Motor neuron (in vitro differentiated cells): ENCODE measurements at regions of chr6 and their contacts with region 1.

Region 1: DNA sequence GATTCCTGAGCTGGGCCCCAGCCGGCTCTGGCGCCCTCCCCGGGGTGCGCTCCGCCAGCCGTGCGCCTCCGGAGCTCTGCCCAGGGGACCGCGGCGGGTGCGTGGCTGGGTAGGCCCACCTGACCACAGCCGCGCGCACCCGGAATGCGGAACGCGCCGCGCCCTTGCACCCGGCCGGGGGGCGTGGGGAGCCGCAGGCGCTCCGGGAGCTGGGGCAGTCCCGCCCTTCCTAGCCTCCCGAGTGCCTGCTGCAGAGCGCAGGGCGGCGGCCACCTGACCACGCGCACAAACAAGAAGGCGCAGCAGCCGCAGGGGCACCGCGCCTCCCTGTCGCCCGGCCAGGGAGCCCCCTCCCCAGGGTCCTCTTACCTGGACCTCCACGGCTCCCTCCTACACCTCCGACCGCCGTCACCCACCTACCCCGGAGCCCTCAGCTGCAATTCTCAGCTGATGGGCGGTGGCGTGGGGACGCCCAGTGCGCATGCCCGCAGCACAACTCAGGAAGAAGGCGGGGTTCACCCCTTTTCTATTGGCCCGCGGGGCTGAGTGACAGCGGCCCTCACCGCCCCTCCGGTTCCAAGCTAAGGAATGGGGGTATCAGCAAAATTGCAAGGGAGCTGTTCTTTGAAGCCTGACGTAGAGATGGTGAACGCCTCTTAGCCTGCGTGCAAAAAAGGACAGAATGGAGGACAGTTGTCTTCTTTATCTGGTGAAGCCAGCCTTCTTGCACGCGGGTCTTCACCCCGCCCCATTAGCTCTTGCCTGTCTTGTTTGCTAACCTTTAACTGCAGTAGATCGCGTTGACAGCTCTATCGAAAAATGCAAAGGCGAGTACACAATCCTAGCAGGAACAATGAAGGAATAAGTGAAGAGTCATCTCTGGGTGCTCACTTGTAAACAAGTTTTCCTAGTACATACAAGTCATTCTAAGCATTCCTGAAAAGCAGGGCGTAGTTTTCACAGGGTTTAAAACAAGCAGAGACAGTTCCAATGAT is at the start of gene STX7:
- ATAC-seq: peak; percentile 87 to 97 (median 96)
- H3K4me3 ChIP-seq: peak within 1 kb of the TSS; percentile 64 to 97 (median 89)
- H3K27ac ChIP-seq: peak within 1 kb of the TSS; percentile 59 to 63
- H3K4me1 ChIP-seq: peaks cover 5 to 11% of the 10 kb centered on the region in 2 donors
- total RNA-seq, gene STX7: 12.7 to 56.3 (median 35.5) TPM

Region 2: GRCh38 chr6:132247381-132248159 is 265.4 kb before region 1 on chr6:
- in situ Hi-C with region 1: no loop called
- ATAC-seq: no peak
- H3K4me3 ChIP-seq: no peak overlapping the region
- H3K27ac ChIP-seq: no peak overlapping the region
- H3K4me1 ChIP-seq: no peaks in the 10 kb centered on the region

Region 3: GRCh38 chr6:132648356-132649227 is 135.7 kb after region 1 on chr6:
- in situ Hi-C with region 1: no loop called
- ATAC-seq: peak in 3 of 8 experiments; percentile 48 to 57 (median 53)
- H3K4me3 ChIP-seq: no peak overlapping the region
- H3K27ac ChIP-seq: no peak overlapping the region
- H3K4me1 ChIP-seq: no peaks in the 10 kb centered on the region

Region 4: DNA sequence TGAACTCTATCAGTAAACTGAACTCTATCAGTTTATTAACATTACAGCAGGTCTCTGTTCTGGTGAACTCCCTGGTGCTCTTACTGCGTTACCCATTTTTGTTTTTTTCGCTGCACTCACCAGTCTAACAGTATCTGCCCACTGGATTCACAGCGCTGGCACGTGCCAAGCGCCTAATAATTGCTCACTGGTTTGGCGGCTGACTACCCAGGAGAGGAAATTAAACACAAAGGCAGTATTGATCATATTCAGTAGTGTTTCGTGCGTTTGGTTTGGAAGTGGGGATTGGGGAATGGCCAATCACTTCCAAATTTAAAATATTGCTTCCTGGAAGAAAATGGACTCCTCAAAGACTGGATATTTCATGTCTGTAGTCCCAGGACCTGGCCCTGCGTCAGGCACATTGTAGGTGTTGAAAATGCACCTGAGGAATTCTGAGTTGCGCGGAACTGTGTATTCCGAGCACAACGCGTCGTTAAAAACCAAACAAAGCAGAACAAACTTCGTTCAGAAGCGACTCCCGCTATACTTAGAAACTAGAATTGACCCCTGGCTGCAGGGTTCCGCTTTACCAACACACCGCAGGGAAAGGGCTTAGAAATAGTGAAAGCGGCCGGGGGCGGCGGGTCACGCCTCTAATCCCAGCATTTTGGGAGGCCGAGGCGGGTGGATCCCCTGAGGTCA is 300.4 kb after region 1 on chr6:
- in situ Hi-C with region 1: loop called in 2 of 9 experiments (anchors 25 kb)
- ATAC-seq: peak in 3 of 8 experiments; percentile 6 to 10 (median 6)
- H3K4me3 ChIP-seq: peak overlapping the region; percentile 73 to 91 (median 83)
- H3K27ac ChIP-seq: peak overlapping the region; percentile 63 to 91
- H3K4me1 ChIP-seq: peaks cover 24 to 27% of the 10 kb centered on the region in 2 donors